Left colon (tissue), 2 donors: ENCODE measurements at regions of chr10 and their contacts with region 1.

Region 1: GRCh38 chr10:60208676-60209269 is 180.9 kb downstream of the ANK3 start:
- DNase-seq: no peak
- ATAC-seq: peak; percentile 52

Region 2: GRCh38 chr10:60114765-60115586 is 93.8 kb before region 1 on chr10:
- intact Hi-C with region 1: loop called (anchors 5 to 10 kb)
- DNase-seq: no peak
- ATAC-seq: peak; percentile 82

Region 3: DNA sequence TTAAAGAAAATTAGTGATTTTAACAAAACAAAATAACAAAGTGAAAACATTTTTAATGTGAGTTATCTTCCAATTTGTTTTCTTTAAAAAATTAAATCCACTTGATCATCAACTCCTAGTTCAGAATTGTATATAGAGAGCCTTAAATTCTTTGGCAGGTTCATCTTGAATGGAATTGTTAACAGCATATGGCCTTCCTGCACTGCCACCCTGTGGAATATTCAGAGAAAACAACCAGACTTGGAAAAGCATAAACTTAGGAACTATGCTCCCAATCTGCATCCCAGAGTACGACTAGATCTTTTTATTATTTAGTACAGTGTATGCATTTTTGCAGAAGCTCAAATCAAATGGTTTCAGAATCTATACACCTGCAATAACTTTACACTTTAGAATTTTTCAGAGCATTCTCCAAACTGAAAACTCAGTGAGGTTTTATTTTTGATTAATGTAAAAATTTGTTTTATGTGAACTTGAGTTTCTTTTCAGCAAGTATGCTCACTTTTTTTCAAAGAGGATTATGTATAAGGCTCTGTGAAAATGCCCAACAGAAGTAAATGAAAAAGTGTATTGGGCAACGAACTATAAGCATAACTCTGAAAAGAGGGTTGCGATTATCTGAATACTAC is 225.8 kb after region 1 on chr10:
- intact Hi-C with region 1: loop called in 1 of 2 experiments (anchors 10 kb)
- DNase-seq: peak in 1 of 2 donors; percentile 16
- ATAC-seq: peak; percentile 87